HEK293 (cell line): ENCODE measurements at regions of chr4 and their contacts with region 1.

Region 1: DNA sequence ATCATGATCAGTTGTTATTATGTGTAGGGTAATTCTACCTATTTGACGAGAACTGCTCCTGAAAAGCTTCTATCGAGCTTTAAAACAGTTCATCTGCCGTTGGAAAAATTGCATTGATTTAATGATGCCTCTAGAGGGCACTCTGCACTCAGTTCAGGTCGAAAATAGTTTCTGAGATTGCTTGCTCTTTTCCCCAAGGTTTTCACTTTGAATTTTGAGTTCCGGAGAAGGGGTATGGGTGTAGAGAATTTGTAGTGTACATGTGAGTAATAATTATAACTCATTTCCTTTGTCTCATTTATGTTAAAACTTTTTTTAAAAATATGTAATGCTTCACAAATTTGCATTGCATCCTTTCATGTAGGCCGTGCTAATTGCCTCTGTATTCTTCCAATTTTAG is 28.4 kb upstream of the TNIP3 start:
- H3K4me3 ChIP-seq: no peak overlapping the region
- H3K27ac ChIP-seq: no peak overlapping the region
- H3K4me1 ChIP-seq: no peaks in the 10 kb centered on the region
- CTCF ChIP-seq: 0 out of 2 replicates have a peak, but pooled peaks have one; percentile 25

Region 2: DNA sequence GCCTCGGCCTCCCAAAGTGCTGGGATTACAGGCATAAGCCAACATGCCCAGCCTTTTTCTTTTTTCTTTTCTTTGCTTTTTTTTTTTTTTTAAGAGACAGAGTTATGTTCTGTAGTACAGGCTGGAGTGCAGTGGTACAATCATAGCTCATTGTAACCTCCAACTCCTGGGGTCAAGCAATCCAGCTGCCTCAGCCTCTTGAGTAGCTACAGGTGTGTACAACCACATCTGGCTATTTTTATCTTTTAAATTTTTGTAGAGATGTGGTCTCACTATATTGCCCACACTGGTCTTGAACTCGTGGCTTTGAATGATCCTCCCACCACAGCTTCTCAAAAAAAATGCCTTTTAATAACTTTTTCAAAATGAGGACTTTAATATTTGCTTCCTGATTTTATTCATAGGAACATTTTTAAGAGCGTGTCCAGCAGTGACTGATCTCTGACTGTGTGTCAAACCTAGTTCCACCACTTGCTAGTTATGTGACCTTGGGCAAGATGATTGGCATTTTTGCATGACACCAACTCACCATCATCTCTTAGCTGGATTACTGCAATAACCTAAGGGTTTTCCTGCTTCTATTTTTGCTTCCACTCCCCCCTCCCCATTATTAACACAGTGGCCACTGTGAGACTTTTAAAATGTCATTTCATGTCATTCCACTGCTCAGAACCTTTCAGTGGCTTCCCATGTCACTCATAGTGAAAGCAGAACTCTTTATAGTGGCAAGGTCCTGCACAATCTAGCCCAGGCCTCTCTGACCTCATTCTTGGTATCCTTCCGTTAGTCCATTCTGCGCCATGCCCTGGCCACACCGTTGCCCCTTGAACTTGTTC is 23.8 kb before region 1 on chr4:
- CTCF ChIA-PET with region 1: interaction called, 11 read pairs
- POLR2A ChIA-PET with region 1: no interaction called
- H3K4me3 ChIP-seq: no peak overlapping the region
- H3K27ac ChIP-seq: no peak overlapping the region
- H3K4me1 ChIP-seq: no peaks in the 10 kb centered on the region
- CTCF ChIP-seq: no peak

Region 3: GRCh38 chr4:121243485-121243884 is 51.0 kb after region 1 on chr4:
- CTCF ChIA-PET with region 1: interaction called, 12 read pairs
- POLR2A ChIA-PET with region 1: no interaction called
- H3K4me3 ChIP-seq: no peak overlapping the region
- H3K27ac ChIP-seq: no peak overlapping the region
- H3K4me1 ChIP-seq: no peaks in the 10 kb centered on the region
- CTCF ChIP-seq: no peak

Region 4: DNA sequence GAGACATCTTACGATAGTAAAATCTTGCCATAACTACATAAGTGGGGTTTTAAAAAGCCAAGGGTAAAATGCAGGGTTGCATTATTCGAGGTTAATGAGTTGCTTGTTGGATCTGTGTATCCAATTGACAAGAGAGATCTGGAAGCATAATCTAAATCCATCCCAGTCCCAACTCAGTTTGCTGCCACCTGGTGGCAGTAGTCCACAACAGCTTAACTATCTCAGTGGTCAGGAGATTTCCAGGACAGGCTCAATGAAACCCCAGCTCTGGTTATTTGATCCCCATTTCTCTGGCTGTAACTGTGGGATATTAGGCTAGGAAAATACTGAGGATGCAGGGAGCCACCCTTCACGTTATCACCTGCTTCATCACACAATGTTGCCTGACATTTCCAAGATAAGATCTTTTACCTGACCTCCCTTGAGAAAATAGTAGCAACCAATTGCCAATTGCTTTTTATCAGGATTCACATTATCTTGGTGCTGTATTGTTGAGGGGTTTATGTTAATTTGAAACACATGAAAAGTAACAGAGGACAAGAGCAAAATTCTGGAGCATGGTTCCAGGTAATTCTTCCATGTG is 59.8 kb after region 1 on chr4:
- CTCF ChIA-PET with region 1: interaction called, 33 read pairs
- POLR2A ChIA-PET with region 1: no interaction called
- H3K4me3 ChIP-seq: no peak overlapping the region
- H3K27ac ChIP-seq: no peak overlapping the region
- H3K4me1 ChIP-seq: no peaks in the 10 kb centered on the region
- CTCF ChIP-seq: peak; percentile 43

Region 5: DNA sequence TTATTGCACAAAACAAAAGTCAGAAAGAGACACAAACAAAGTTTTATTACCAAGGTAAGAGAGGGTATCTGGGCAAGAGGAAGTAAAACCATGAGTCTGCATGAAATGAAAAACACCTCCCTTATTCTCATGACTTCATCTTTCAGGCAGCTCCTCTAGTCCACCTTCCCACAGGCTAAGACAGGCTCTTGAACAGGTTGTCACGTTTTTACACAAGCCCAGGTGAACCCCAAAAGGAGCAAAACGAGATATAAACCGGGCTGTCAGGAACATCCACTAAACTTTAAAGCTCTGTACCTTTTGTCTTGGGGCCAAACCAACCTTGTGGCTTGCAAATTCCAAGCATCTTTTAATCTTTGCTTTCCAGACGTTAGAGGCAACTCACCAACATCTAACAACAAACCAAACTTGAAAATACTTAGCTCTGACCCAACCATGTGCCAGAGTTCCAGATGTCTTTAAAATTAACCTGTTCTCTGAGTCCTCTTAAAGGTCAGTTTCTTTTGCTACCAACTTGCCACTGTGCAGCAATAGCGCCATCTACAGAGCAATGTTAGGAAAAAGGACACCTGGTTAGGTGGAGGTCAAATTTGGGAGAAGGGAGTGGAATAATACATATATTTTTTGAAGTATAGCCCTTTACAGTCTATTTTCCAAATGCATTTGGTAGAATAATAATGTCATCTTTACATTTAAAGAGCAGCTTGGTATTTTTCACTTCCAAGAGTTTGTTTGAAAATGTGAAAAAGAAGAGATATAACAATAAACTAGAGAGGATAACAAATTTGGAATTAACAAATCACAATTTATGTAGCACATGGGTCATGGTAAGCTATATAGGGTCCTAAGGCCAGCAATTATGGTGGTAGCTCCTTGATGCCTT is 115.2 kb after region 1 on chr4:
- CTCF ChIA-PET with region 1: interaction called, 19 read pairs
- POLR2A ChIA-PET with region 1: no interaction called
- H3K4me3 ChIP-seq: no peak overlapping the region
- H3K27ac ChIP-seq: no peak overlapping the region
- H3K4me1 ChIP-seq: no peaks in the 10 kb centered on the region
- CTCF ChIP-seq: no peak